ENCODE measurements at regions of chr3 and their contacts with region 1.

Region 1: DNA sequence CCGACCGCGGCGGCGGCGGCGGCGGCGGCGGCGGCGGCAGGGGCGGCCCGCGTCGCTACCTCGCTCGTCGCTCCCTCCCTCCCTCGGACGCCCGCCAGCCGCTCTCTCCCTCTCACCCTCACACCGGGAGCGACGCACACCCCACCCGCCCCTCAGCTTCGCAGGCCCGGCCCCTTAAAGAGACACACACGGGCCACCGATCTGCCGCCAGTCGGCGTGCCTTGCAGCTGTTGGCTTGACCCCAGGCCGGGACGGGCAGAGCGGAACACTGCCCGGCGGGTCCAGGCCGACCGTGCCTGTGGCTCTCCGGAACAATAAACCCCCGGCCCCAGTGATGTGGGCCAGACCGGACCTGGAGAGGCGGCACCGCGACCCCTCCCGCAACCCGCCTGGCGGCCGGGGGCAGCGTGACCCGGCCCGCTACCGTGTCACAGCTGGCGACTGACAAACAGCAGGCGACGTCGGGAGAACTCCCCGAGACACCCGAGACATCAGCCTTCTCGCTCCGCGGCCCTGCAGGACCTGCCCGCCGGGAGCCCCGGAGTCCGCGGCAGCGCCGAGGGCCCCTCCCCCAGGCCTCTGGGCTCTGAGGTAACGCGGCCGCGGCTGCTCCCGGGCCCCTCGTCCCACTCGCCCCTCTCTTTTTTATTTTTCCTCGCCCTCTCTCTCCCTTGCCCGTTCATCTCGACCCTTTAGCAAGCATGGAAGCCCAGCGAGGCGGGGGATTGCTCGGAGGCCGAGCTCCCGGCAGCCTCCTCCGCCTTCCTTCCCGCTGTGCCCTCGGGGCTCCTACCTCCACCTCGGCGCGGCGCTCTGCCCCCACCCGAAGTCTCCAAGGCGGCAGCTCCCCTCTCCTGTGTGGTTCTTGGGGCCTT is at the start of gene SETD2:
- DNase-seq: peak; percentile 80 to 98 (median 94)

Region 2: DNA sequence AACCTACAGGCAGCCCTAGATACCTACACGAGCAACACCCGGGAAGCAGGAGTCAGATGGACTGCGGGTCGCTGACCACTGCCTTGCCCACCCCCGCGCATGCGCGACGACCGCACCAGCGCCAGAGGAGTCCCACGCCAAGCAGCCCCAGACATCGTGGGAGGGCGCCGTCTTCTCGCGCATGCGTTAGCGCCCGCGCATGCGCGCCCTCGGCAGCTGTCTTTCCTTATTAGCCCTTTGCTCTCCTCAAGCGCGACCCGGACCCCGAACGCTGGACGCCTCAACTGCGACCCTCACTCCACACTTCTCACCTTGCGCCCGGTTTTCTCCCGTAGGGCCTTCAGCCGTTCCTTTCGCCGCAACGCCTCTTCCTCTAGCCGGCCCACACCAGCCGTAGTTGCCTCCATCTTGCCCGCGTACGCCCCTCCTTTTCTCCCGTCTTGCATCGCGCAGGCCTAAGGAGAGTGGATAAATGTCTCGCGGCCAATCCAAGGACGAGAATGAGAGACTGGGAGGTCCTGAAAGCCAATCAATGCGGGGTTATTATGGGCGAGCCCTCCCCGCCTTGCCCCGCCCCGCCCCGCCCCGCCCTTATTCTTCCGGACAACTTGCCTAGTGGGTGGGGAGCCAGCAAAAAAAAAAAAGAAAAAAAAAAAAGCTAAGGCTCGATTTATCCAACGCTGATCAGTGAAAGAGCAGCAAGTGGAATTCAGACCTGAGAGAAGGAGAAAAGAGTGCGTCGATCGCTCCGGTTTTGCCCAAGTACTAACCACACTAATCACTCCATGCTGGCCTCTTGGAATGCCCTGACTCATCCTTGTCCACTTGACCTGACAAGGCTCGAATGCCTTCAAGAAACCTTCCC is 187.7 kb before region 1 on chr3 and contains the start of gene CCDC12:
- intact Hi-C with region 1: loop called (anchors 2 kb)
- DNase-seq: peak; percentile 93 to 99 (median 98)

Region 3: GRCh38 chr3:47009225-47010110 is 154.8 kb before region 1 on chr3:
- intact Hi-C with region 1: loop called (anchors 10 kb)
- DNase-seq: peak; percentile 77 to 97 (median 92)

Region 4: GRCh38 chr3:47282424-47283192 is 118.4 kb after region 1 on chr3 and contains the starts of genes KIF9 and KLHL18:
- intact Hi-C with region 1: loop called (anchors 5 kb)
- DNase-seq: peak; percentile 89 to 98 (median 95)

Region 5: GRCh38 chr3:47380601-47381316 is 216.5 kb after region 1 on chr3 and contains the start of gene PTPN23:
- intact Hi-C with region 1: loop called (anchors 5 kb)
- DNase-seq: peak; percentile 93 to 100 (median 98)

Measured in head of caudate nucleus (tissue), 42 donors.